Activated T-helper 2 cell treated with anti-CD3 and anti-CD28 coated beads, Interferon-gamma antibody, Interleukin-2, Interleukin-4, amounts not matched to agents 10 μg/mL and 5 μg/mL and 100 μg/mL, durations not matched to agents 14 hours and 24 hours and 36 hours (primary cell): ENCODE measurements at regions of chr5 and their contacts with region 1.

Region 1: DNA sequence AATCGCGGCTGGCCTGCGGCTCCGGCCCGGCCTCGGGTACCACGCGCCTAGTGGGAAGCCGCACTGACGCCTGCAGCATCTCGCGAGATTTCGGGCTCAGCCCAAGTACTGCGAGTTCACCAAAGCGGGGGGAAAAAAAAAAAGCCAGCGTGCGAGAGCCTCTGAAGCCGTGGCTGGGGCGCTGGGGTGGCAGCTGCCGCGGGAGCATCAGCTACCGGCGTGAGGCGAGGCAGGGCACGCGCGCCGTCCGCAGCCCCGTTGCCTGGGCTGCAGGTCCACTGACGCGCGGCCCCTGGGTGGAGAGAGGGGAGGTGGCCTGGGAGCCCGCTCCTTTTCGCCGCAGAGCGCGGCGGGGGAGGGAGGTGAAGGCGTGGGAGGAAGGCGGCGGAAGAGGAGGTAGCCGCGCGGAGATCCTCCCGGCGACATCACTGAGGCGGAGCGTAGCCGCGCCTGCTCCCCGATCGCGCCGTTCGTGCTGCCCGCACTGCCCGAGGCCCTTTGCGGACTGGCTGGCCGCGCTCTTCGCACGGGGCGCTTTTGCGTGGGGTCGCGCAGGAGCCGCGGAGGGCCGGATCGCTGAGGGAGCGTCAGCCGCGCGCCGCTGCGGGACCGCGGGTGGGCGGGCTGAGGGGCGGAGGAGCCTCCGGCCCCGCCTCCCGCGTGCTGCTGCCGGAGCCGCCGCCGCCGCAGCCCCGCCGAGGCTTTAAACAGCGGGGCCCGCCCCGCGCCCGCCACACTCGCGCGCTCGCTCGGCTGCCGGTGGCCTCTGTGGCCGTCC is at the start of gene SLC12A2:
- DNase-seq: peak; percentile 88
- H3K4me3 Mint-ChIP-seq: peak within 1 kb of the TSS; percentile 93
- H3K27ac Mint-ChIP-seq: peak within 1 kb of the TSS; percentile 95
- H3K4me1 Mint-ChIP-seq: peaks cover 57% of the 10 kb centered on the region
- H3K27me3 Mint-ChIP-seq: no peaks in the 10 kb centered on the region
- total RNA-seq, gene SLC12A2: 19.7 and 21.9 TPM in 2 replicates

Region 2: GRCh38 chr5:127030259-127031146 is 1052.7 kb before region 1 on chr5 and contains the start of gene MARCHF3:
- intact Hi-C with region 1: loop called (anchors 5 kb)
- DNase-seq: peak; percentile 94
- H3K4me3 Mint-ChIP-seq: peak within 1 kb of the TSS; percentile 86
- H3K27ac Mint-ChIP-seq: peak within 1 kb of the TSS; percentile 38
- H3K4me1 Mint-ChIP-seq: peaks cover 15% of the 10 kb centered on the region
- H3K27me3 Mint-ChIP-seq: peaks cover 42% of the 10 kb centered on the region
- total RNA-seq, gene MARCHF3: 1.9 and 2.1 TPM in 2 replicates

Region 3: GRCh38 chr5:127564002-127564769 is 519.0 kb before region 1 on chr5:
- intact Hi-C with region 1: loop called (anchors 10 kb)
- DNase-seq: no peak
- H3K4me3 Mint-ChIP-seq: no peak overlapping the region
- H3K27ac Mint-ChIP-seq: no peak overlapping the region
- H3K4me1 Mint-ChIP-seq: peaks cover 7% of the 10 kb centered on the region
- H3K27me3 Mint-ChIP-seq: peaks cover 18% of the 10 kb centered on the region

Region 4: DNA sequence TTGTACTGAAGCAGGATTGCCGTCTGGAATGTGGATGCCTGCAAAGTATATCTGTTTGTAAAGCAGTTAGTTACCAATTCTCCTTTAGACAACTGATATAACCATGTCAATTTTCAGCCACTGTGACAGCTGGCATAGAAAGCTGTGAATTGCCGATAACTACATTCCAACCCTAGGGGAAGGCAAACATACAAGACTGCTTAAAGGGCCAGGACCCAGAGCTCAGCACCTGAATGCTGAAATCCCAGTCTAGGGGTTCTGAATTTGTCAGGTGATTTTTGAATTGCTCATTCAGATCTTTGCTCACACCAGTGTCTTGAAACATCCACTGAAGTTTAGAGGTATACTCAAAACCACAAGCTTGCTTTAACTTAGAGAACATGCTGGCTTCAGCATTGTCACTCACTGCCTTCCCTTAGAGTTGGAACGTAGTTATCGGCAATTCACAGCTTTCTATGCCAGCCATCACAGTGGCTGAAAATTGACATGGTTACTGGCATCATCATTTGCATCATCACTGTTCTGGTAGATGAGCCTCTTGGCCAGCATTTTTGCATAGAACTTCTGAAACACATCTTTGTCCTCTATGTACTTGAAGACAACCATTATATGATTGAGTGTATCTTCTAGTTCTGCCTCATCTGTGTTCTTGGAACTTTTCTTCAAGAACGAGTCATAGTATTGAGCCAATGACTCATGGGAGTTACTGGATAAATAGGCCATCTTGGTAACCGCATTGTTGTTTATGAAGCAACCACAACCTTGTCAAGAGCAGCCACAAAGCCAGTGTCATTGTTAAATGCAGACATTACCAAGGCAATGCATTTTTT is 297.9 kb before region 1 on chr5:
- intact Hi-C with region 1: loop called (anchors 1 kb)
- DNase-seq: peak; percentile 27
- H3K4me3 Mint-ChIP-seq: peak overlapping the region; percentile 38
- H3K27ac Mint-ChIP-seq: peak overlapping the region; percentile 93
- H3K4me1 Mint-ChIP-seq: peaks cover 24% of the 10 kb centered on the region
- H3K27me3 Mint-ChIP-seq: peaks cover 6% of the 10 kb centered on the region

Region 5: DNA sequence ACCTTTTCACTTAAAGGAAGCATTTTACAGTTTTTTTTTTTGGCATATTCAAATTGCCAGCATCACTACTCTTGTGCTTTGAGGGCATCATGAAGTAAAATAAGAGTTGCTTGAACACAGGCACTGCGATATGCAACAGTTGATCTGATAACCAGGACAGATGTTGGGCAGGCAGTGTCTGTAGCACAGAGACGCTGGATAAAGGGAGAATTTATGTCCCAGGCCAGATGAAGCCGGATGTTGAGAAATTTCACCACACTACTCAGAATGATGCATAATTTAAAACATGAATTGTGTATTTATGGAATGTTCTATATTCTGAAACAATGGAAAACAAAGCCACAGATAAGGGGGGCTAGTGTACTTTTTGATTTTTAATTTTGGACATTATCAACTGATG is 71.7 kb after region 1 on chr5:
- intact Hi-C with region 1: loop called (anchors 5 kb)
- DNase-seq: no peak
- H3K4me3 Mint-ChIP-seq: no peak overlapping the region
- H3K27ac Mint-ChIP-seq: no peak overlapping the region
- H3K4me1 Mint-ChIP-seq: no peaks in the 10 kb centered on the region
- H3K27me3 Mint-ChIP-seq: no peaks in the 10 kb centered on the region

Region 6: DNA sequence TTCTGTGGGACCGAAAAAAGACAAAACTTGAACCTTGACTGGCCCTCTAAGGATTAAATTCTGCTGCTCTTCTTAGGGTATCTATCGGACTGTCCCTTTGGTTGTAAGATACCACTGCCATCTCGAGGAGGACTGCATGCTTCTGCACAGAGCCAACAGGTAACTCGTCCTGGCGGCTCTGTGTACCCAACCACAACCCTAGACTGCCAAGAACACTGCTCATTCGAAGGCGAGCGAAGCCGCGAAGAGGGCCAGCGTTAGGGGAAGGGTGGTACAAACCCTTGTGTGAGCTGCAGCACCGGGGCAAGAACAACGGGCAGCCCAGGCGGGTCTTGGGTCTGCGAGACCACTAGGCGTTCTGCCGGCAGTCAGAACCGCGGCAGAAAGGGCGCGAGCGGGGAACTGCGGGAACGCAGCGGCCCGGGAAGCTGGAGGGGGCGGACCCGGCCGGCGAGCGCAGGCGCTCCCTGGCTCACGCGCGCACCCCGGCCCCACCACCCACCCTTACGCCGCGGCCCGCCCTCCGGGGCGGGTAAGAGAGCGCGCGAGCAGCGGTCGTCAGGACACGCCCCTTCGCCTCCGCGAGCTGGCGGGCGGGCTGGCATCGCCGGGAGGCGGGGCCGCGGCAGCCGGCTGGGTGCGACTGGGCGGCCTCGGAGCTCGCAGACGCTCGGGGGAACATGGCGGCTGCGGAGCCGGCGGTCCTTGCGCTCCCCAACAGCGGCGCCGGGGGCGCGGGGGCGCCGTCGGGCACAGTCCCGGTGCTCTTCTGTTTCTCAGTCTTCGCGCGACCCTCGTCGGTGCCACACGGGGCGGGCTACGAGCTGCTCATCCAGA is 1011.1 kb after region 1 on chr5 and contains the start of gene ISOC1:
- intact Hi-C with region 1: loop called (anchors 5 kb)
- DNase-seq: peak; percentile 90
- H3K4me3 Mint-ChIP-seq: peak within 1 kb of the TSS; percentile 82
- H3K27ac Mint-ChIP-seq: peak within 1 kb of the TSS; percentile 48
- H3K4me1 Mint-ChIP-seq: peaks cover 24% of the 10 kb centered on the region
- H3K27me3 Mint-ChIP-seq: peaks cover 24% of the 10 kb centered on the region
- total RNA-seq, gene ISOC1: 26.6 and 28.1 TPM in 2 replicates